T-cell (primary cell): ENCODE measurements at regions of chr10 and their contacts with region 1.

Region 1: GRCh38 chr10:32367793-32368453 is 21.0 kb upstream of the EPC1 start:
- DNase-seq: peak; percentile 49 to 90 (median 71)
- ATAC-seq: peak; percentile 62 to 67 (median 66)
- H3K4me3 ChIP-seq: no peak overlapping the region
- H3K4me3 Mint-ChIP-seq: peak overlapping the region; percentile 28 to 52 (median 50)
- H3K27ac ChIP-seq: peak overlapping the region; percentile 19
- H3K27ac Mint-ChIP-seq: peak overlapping the region; percentile 53 to 82
- H3K4me1 ChIP-seq: peaks cover 22 to 35% of the 10 kb centered on the region in 2 experiments
- H3K4me1 Mint-ChIP-seq: peaks cover 70% of the 10 kb centered on the region in 3 donors
- H3K27me3 ChIP-seq: no peaks in the 10 kb centered on the region
- H3K27me3 Mint-ChIP-seq: no peaks in the 10 kb centered on the region

Region 2: DNA sequence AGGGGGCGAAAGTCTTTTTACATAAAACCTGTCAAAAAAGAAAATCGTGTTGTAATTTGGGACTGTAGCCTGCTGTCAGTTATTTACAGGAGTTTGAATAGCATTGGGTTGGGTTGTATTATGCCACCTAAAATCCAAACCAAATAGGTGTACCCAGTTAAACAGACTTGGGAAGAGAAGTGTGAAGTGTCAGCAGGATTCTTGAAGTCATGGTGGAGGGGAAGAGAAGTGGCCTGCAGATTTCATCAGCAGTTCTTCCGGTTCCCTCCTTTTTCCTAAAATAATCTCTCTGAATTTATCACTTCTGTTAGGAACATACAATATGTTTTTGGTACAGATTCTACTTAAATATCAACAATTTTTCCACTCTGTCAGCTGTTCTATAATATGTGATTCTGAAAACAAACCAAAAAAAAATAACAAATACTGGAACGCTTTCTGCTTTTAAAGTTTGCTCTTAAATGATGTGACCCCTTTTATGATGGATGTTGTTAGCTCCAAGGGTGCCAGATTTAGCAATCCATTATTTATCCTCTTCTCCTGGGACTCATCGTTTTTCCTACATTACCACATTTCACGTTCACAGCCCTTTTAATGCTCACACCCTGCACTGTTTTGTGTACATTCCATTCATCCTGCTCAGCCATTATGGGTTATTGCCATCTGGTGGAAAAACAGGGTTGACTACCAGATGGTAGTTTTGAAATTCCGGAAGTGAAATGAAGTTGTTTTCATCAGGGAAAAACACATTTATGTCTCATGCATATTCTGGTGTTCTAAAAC is 420.6 kb before region 1 on chr10:
- CTCF ChIA-PET with region 1: no interaction called
- POLR2A ChIA-PET with region 1: no interaction called
- DNase-seq: no peak
- ATAC-seq: no peak
- H3K4me3 ChIP-seq: no peak overlapping the region
- H3K4me3 Mint-ChIP-seq: no peak overlapping the region
- H3K27ac ChIP-seq: no peak overlapping the region
- H3K27ac Mint-ChIP-seq: no peak overlapping the region
- H3K4me1 ChIP-seq: peaks cover 3 to 4% of the 10 kb centered on the region in 2 experiments
- H3K4me1 Mint-ChIP-seq: no peaks in the 10 kb centered on the region
- H3K27me3 ChIP-seq: no peaks in the 10 kb centered on the region
- H3K27me3 Mint-ChIP-seq: no peaks in the 10 kb centered on the region

Region 3: DNA sequence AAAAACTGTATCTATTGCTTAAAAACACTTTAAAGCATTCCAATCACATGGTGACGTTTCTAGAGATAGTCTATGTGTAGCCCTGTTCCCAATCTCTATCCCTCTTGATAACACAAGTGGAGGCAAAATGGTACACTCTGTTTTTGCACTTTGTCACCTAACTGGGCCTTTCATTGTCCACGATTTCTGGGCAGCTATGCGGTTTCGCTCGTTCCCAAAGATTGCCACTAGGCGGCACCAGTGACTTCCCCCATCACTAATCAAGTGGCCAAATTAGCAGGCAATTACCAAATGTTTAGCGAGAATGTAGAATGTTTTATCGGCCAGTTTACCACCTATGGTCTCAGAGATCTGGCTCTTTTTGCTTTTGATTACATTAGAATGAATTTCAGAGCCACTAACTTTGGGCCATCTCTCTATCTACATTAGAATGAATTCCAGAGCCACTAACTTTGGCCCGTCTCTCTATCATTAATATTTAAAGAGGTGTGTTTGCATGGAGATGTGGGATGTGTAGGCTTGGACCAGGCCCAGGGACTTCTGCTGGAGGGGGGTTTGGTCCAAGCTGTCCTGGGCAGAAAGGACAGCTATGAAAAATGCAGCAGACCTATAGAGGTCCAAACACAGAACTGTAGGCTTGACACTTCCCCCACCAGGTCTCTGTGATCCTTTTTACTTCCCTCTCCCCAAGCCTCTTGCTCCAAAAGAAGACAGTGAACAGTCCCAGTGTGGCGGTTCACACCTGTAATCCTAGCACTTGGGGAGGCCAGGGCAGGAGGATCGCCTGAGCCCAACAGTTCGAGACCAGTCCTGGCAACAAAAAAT is 111.1 kb before region 1 on chr10:
- CTCF ChIA-PET with region 1: interaction called, 16 to 23 read pairs
- POLR2A ChIA-PET with region 1: interaction called in 1 of 2 experiments, 3 read pairs
- DNase-seq: peak; percentile 24 to 83 (median 55)
- ATAC-seq: peak; percentile 67 to 77 (median 70)
- H3K4me3 ChIP-seq: no peak overlapping the region
- H3K4me3 Mint-ChIP-seq: no peak overlapping the region
- H3K27ac ChIP-seq: no peak overlapping the region
- H3K27ac Mint-ChIP-seq: peak overlapping the region in 1 of 2 donors; percentile 19
- H3K4me1 ChIP-seq: peaks cover 0 to 2% of the 10 kb centered on the region in 2 experiments
- H3K4me1 Mint-ChIP-seq: peaks cover 5 to 7% (median 5%) of the 10 kb centered on the region in 3 donors
- H3K27me3 ChIP-seq: no peaks in the 10 kb centered on the region
- H3K27me3 Mint-ChIP-seq: no peaks in the 10 kb centered on the region

Region 4: GRCh38 chr10:32378363-32379317 is 10.7 kb after region 1 on chr10:
- CTCF ChIA-PET with region 1: interaction called, 3 to 20 read pairs
- POLR2A ChIA-PET with region 1: interaction called, 3 to 4 read pairs
- DNase-seq: peak; percentile 77 to 97 (median 93)
- ATAC-seq: peak; percentile 91 to 97 (median 96)
- H3K4me3 ChIP-seq: peak overlapping the region; percentile 87 to 97
- H3K4me3 Mint-ChIP-seq: no peak overlapping the region
- H3K27ac ChIP-seq: peak overlapping the region; percentile 77
- H3K27ac Mint-ChIP-seq: no peak overlapping the region
- H3K4me1 ChIP-seq: peaks cover 4 to 23% of the 10 kb centered on the region in 2 experiments
- H3K4me1 Mint-ChIP-seq: peaks cover 17 to 22% (median 21%) of the 10 kb centered on the region in 3 donors
- H3K27me3 ChIP-seq: no peaks in the 10 kb centered on the region
- H3K27me3 Mint-ChIP-seq: no peaks in the 10 kb centered on the region

Region 5: DNA sequence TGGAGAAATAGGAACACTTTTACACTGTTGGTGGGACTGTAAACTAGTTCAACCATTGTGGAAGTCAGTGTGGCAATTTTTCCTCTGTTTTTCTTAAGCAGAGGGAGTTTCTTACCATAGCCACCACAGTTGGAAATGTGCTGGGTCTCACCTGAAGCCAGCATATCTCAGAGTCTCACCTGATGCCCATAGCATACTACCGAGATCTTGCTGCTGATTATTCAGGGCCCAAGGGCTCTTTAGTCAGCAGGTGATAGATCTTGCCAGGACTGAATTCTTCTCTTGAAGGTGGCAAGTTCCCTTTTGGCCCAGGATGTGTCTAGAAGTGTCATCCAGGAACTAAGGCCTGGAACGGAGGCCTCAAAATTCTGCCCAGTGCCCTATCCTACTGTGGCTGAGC is 293.4 kb after region 1 on chr10:
- CTCF ChIA-PET with region 1: no interaction called
- POLR2A ChIA-PET with region 1: no interaction called
- DNase-seq: no peak
- ATAC-seq: no peak
- H3K4me3 ChIP-seq: no peak overlapping the region
- H3K4me3 Mint-ChIP-seq: no peak overlapping the region
- H3K27ac ChIP-seq: no peak overlapping the region
- H3K27ac Mint-ChIP-seq: no peak overlapping the region
- H3K4me1 ChIP-seq: no peaks in the 10 kb centered on the region
- H3K4me1 Mint-ChIP-seq: no peaks in the 10 kb centered on the region
- H3K27me3 ChIP-seq: no peaks in the 10 kb centered on the region
- H3K27me3 Mint-ChIP-seq: no peaks in the 10 kb centered on the region